GM18951 (cell line): ENCODE measurements at regions of chr11 and their contacts with region 1.

Region 1: DNA sequence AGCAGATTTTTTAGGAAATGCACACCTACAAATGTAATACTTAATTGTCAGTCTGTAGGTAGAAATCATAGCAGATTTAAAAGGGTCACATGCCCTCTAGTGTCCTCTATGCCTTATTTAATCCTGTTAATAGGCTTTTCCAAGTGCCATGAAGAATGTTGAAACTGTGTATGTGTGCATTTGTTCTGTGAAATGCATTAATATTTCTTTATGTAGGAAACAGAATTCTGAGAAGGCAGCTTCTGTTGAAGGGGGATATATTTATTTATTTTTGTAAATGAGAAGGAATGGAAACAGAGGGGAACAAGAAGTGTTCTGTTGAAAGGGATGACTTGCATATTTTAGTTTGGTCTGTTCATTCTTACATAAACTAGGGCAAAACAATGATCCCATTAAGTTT is 51.0 kb downstream of the SVIP start:
- POLR2A ChIP-seq: no peak

Region 2: DNA sequence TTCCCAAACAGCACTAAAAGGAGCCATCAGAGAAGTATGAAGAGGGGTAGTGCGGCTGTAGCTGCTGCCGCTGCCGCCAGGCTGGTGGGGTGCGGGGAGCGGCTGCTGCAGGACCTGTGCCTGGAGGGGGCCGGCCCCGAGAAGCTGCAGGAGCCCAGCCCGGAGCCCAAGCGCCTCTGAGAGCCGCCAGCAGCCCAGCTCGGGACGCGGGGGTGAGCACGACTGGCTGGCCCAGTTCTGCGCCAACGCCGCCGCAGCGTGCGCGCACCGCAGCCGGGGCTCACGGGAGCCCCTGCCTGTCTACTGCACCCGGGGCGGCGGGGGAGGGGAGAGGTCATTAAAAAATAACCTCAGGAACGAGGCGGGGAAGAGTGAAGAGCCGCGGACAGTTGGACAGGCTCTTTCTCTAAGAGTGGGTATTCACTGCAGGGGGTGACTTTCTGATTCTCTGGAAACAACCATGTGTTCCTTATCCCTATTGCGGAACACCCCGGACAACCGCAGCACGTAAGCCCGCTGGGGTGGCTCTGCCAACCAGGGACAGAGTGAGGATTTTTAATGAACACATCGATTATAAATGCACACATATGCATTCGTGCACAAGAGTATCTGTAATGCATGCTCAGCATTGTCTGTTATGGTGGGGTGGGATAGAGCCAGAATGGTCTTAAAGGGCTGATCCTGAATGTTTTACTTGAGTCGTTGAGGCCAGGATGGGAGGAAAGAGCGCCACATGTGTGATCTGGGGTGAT is 111.8 kb before region 1 on chr11:
- in situ Hi-C with region 1: loop called (anchors 10 kb)
- POLR2A ChIP-seq: peak; percentile 63